Activated CD4-positive, alpha-beta T cell treated with anti-CD3 and anti-CD28 coated beads for 36 hours (primary cell): ENCODE measurements at regions of chr20 and their contacts with region 1.

Region 1: DNA sequence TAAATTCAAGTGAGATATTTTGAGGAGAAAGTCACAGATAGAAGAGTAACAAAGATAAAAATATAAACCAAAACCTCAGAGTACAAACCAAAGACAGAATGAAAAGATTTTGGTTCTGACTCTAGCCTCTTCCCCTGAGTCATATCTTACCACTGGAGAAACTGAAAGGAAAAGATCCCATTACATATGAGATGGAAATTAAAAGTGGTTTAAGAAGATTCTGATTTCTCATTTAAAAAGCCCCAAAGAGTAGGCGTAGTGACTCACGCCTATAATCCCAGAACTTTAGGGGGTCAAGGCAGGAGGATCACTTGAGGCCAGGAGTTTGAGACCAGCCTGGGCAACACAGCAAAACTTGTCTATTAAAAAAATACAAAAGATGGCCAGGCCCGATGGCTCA is 30.6 kb downstream of the SPINT4 start:
- DNase-seq: peak; percentile 51
- ATAC-seq: peak; percentile 76
- H3K4me3 Mint-ChIP-seq: no peak overlapping the region
- H3K27ac Mint-ChIP-seq: peak overlapping the region; percentile 63
- H3K4me1 Mint-ChIP-seq: peaks cover 28% of the 10 kb centered on the region
- H3K27me3 Mint-ChIP-seq: peaks cover 21% of the 10 kb centered on the region

Region 2: DNA sequence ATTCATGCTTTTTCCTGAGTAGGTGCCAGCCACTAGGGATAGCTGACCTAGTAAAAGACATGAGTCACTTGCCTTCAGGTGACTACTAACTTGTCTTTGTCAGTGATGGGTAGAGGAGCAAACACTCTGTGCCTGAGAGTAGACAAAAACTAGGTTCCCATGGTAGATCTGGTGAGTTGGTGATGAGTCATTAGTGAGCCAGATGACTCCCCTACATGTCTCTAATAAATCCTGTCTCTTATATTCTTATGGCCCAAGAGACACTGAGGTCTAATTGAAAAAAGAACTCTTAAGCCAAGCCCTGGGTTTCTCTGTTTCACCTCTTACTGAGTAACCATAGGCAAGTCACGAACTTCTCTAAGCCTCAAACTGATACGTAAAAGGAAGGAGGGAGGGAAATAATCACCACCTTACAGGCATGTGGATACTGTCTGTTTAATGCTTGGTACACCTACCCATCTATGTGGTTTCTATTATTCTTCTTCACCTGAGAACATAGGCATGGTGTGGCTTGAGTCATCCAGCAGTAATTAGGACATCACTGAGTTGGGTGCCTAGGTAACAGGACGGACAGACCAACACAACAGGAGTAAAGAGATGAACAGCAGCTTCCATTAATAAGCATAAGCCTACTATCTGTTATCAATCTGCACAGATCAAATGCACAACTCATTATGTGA is 1256.8 kb before region 1 on chr20:
- CTCF ChIA-PET with region 1: no interaction called
- POLR2A ChIA-PET with region 1: no interaction called
- intact Hi-C with region 1: loop called in 1 of 2 experiments (anchors 10 kb)
- DNase-seq: peak; percentile 27
- ATAC-seq: peak; percentile 84
- H3K4me3 Mint-ChIP-seq: no peak overlapping the region
- H3K27ac Mint-ChIP-seq: peak overlapping the region; percentile 78
- H3K4me1 Mint-ChIP-seq: peaks cover 50% of the 10 kb centered on the region
- H3K27me3 Mint-ChIP-seq: no peaks in the 10 kb centered on the region

Region 3: GRCh38 chr20:45322952-45323383 is 429.8 kb before region 1 on chr20:
- CTCF ChIA-PET with region 1: interaction called, 4 read pairs
- POLR2A ChIA-PET with region 1: no interaction called
- intact Hi-C with region 1: loop called in 1 of 2 experiments (anchors 5 kb)
- DNase-seq: no peak
- ATAC-seq: no peak
- H3K4me3 Mint-ChIP-seq: no peak overlapping the region
- H3K27ac Mint-ChIP-seq: no peak overlapping the region
- H3K4me1 Mint-ChIP-seq: peaks cover 24% of the 10 kb centered on the region
- H3K27me3 Mint-ChIP-seq: no peaks in the 10 kb centered on the region

Region 4: DNA sequence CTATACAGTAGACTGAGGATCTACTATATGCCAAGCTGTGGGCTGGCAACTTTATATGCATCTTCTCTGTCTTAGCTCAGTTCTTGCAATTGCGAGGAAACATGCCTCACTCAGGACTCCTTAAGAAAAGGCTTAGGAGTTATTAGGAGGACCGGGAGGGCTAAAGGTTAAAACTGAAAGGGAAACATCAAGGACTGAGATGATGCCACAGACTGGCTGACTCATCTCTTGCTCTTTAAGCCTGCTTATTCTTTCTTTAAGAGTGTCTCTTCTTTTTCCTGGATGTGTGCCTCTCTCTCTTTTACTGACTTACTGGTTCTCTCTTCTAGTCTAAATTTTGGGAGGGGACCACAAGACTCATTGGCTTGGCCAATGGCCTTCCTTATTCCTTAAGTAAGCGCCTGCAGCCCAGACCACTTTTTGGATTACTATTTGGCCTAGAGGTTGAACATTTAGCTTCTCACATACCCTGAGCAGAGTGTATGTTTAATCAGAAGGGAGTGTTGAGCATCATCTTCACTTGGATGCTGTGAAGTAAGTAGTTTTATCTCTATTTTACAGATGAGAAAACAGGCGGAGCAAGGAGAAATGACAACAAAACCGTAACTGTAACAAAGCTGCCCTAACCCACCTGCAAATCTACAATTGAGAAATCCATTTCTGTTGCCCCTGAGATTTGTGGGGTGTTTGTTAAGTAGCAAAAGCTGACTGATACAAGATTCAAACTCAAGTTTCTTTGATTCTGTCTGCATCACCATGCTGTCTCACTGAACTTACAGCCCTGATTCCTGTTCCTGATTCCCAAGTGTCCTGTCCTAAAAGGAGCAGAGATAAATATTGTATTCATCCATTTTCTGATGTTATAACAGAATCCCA is 397.3 kb before region 1 on chr20:
- CTCF ChIA-PET with region 1: no interaction called
- POLR2A ChIA-PET with region 1: interaction called, 4 read pairs
- intact Hi-C with region 1: loop called in 1 of 2 experiments (anchors 2 kb)
- DNase-seq: peak; percentile 50
- ATAC-seq: peak; percentile 84
- H3K4me3 Mint-ChIP-seq: peak overlapping the region; percentile 33
- H3K27ac Mint-ChIP-seq: peak overlapping the region; percentile 92
- H3K4me1 Mint-ChIP-seq: peaks cover 51% of the 10 kb centered on the region
- H3K27me3 Mint-ChIP-seq: no peaks in the 10 kb centered on the region

Region 5: DNA sequence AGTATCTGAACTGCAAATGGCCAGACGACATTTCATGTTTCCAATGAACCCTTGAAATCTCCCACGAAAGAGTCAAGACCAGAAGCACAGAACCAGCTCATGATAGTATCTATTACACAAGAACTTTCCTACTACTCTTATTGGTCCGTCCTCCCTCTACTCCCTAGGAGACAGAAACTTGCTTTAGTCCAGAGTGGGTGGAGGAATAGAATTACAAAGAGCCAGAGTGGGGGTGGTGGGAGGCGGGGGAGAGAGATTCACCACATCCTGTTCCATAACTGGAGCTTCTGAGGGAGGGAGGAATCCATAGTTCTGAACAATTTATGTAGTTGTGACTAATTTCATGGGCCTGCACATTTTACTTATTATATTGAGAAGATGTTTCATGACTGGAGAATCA is 141.7 kb before region 1 on chr20:
- CTCF ChIA-PET with region 1: no interaction called
- POLR2A ChIA-PET with region 1: no interaction called
- intact Hi-C with region 1: loop called (anchors 1 to 2 kb)
- DNase-seq: peak; percentile 79
- ATAC-seq: peak; percentile 93
- H3K4me3 Mint-ChIP-seq: no peak overlapping the region
- H3K27ac Mint-ChIP-seq: peak overlapping the region; percentile 47
- H3K4me1 Mint-ChIP-seq: peaks cover 23% of the 10 kb centered on the region
- H3K27me3 Mint-ChIP-seq: peaks cover 26% of the 10 kb centered on the region

Region 6: DNA sequence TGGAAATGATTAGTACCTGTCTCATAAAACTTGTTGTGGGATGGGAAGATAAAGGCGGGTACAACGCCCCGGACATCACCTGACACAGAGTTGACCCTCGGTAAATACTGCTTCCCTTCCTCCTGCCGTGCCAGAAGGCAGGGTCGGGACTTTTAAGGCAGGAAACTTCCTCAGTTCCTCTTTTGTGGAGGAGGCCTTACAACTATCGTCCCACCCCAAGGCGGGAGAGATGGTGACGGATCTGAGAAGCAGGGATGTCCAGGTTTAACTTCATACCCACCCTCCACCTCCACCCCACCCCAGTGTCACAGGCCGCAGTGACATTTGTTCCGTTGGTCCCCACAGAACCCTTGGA is 39.6 kb after region 1 on chr20:
- CTCF ChIA-PET with region 1: no interaction called
- POLR2A ChIA-PET with region 1: no interaction called
- intact Hi-C with region 1: loop called in 1 of 2 experiments (anchors 2 kb)
- DNase-seq: peak; percentile 12
- ATAC-seq: peak; percentile 2
- H3K4me3 Mint-ChIP-seq: peak overlapping the region; percentile 81
- H3K27ac Mint-ChIP-seq: peak overlapping the region; percentile 80
- H3K4me1 Mint-ChIP-seq: peaks cover 13% of the 10 kb centered on the region
- H3K27me3 Mint-ChIP-seq: no peaks in the 10 kb centered on the region